Activated CD4-positive, alpha-beta T cell treated with anti-CD3 and anti-CD28 coated beads for 36 hours (primary cell): ENCODE measurements at regions of chr6 and their contacts with region 1.

Region 1: DNA sequence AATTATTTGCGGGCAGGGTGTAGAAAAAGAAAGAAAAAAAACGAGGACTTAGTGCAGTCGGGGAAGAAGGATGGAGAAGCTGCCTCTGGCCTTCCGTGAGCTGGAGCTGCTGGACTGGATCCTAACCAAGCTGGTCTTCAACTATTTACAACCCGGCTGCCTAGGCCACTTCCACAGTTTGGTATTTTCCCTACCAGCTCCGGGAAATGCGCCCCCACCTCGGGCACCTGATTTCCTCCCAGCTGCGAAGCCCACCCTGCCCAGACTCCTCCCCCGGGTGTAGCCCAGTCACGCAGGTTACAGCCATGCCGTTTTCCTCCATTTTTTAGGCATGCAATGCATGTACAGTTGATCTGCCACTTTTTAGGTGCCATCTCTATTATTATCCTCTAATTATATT is 21.2 kb downstream of the THEMIS start:
- DNase-seq: peak; percentile 47
- ATAC-seq: peak; percentile 13
- H3K4me3 Mint-ChIP-seq: peak overlapping the region; percentile 65
- H3K27ac Mint-ChIP-seq: peak overlapping the region; percentile 76
- H3K4me1 Mint-ChIP-seq: peaks cover 78% of the 10 kb centered on the region
- H3K27me3 Mint-ChIP-seq: no peaks in the 10 kb centered on the region

Region 2: DNA sequence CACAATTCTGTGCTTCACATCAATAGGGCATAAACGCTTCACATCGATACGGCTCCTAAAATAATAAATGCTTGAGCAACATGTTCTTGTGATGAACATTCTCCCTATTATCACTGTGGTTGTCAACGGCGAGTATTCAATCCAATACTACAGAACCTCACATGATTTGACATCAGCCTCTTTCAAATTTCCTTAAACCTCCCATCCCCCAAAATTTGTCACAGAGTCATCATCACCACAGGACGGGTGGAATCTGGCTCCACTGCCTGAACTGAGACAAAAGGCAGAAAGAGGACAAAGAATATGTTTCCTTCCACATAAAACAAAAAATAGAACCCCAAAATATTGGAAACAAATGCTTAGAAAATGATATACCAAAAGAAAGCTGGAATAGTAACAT is 13.9 kb after region 1 on chr6:
- CTCF ChIA-PET with region 1: interaction called, 6 read pairs
- POLR2A ChIA-PET with region 1: no interaction called
- intact Hi-C with region 1: loop called (anchors 1 kb)
- DNase-seq: peak; percentile 63
- ATAC-seq: peak; percentile 82
- H3K4me3 Mint-ChIP-seq: peak overlapping the region; percentile 77
- H3K27ac Mint-ChIP-seq: peak overlapping the region; percentile 96
- H3K4me1 Mint-ChIP-seq: peaks cover 58% of the 10 kb centered on the region
- H3K27me3 Mint-ChIP-seq: no peaks in the 10 kb centered on the region

Region 3: DNA sequence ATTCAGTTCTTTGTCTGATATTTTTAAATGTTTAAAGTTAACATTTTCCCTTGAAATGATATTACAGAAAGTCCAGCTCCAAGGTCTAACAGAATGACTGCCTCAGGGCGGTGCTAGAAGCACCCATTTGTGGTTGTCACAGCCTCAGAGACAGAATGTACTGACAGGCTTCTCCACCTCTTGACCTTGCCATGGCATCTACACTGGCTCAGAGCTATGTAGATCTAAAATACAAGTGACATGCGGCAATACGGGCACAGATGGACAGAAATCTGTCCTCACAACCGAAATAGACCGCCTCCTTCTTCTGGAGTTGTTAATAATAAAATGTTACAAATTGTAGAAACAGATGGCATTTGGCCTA is 188.4 kb after region 1 on chr6:
- CTCF ChIA-PET with region 1: no interaction called
- POLR2A ChIA-PET with region 1: no interaction called
- intact Hi-C with region 1: no loop called
- DNase-seq: no peak
- ATAC-seq: no peak
- H3K4me3 Mint-ChIP-seq: no peak overlapping the region
- H3K27ac Mint-ChIP-seq: no peak overlapping the region
- H3K4me1 Mint-ChIP-seq: peaks cover 5% of the 10 kb centered on the region
- H3K27me3 Mint-ChIP-seq: no peaks in the 10 kb centered on the region